Activated CD8-positive, alpha-beta T cell treated with anti-CD3 and anti-CD28 coated beads for 36 hours (primary cell): ENCODE measurements at regions of chr11 and their contacts with region 1.

Region 1: DNA sequence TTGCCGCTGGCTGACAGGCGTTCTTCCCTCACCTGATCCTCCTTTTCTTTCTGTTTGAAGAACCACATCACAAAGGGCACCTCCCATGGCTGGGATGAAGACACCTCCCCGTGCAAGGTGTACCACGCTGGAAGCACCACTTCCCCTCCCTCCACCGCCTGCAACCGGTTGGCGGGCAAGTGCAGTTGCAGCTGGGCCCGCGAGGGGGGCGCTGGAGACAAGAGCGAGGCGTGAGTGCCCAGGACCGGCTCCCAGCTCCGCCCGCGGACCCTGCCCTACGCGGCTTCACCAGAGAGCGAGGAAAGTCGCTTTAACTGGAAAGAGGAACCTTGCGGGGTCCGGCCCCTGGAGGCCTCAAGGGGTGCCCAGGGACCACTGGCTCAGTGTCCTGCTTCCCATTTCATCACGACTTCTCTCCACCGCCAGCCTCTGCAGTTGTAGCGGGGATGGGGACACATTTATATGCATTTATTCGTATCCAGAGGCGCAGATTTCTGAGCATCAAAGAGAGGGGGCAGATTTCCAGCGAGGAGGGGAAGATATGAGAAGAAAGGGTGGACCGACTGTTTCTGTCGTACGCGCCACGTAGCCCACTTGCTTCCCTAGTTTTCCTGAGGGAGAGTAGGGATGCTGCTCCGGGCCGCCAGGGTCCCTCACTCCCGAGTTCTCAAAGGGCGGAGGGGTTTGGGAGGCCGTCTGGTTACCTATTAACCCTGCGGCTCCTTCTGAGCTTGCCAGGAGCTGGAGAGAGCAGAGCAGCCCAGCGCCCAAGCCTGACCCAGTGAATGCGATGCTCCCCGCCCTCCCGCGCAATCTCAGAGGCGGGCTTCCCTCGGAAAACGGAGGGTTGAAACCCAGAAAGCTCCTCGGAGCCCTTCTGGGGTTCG is 3.5 kb downstream of the ESAM start:
- DNase-seq: peak; percentile 78
- ATAC-seq: peak; percentile 81
- H3K4me3 Mint-ChIP-seq: peak overlapping the region; percentile 62
- H3K27ac Mint-ChIP-seq: no peak overlapping the region
- H3K4me1 Mint-ChIP-seq: peaks cover 24% of the 10 kb centered on the region
- H3K27me3 Mint-ChIP-seq: peaks cover 43% of the 10 kb centered on the region
- CTCF ChIP-seq: peak; percentile 85

Region 2: DNA sequence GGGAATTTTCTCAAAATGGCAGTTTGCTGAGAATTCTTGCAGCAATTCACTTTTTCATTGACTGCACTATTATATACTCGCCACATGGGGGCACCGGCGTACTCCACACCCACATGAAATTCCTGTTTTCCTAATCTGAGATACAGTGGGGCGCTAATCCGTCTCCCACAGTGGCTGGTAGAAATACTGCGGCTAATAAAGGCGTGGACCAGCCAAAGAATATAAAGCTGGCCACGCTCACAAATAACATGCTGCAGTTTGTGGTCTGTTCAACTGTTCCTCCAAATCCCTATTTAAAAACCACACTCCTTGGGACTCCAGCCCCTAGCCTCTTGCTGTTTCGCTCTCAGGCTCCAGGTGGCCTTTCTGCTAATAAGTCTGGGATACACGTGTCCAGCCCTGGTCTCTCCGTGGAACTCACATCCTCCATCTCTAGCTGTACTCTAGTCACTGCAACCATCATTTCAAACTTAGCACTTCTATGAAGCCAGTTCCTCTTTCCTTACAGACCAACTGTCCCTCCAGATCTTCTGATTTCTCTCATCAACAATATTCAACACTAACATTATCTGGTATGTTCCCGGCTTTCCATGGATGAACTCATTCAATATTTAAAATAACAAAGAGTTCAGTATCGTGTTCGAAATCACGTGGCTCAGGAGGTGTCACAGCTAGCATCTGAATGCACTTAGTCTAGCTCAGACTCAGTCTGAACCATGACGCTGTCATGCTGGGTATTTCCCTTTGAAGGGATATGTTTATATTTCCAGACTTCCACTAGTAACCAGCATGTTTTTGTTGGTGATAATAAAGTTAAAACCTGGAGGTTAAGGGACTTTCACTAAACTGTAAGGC is 113.9 kb before region 1 on chr11:
- CTCF ChIA-PET with region 1: interaction called, 14 read pairs
- POLR2A ChIA-PET with region 1: no interaction called
- intact Hi-C with region 1: no loop called
- DNase-seq: peak; percentile 27
- ATAC-seq: peak; percentile 78
- H3K4me3 Mint-ChIP-seq: no peak overlapping the region
- H3K27ac Mint-ChIP-seq: no peak overlapping the region
- H3K4me1 Mint-ChIP-seq: no peaks in the 10 kb centered on the region
- H3K27me3 Mint-ChIP-seq: no peaks in the 10 kb centered on the region
- CTCF ChIP-seq: peak; percentile 94

Region 3: DNA sequence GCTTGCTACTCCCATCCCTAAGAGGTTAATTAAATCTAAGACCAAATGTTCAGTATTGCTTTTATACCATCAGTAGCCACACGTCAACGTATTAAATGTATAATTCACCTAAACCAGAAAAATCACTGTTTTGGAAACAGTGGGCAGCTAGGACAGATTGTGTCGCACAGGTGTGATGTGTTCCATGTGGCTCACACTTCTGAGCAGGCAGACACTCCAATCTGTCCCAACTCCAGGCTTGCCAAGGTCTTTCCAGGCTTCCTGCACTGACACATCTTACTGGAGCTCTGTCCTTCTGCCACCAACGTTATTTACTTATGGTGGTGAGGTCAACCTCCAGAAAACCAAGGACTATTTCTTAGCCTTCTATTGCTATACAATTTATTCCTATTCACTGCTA is 96.5 kb before region 1 on chr11:
- CTCF ChIA-PET with region 1: interaction called, 13 read pairs
- POLR2A ChIA-PET with region 1: no interaction called
- intact Hi-C with region 1: no loop called
- DNase-seq: no peak
- ATAC-seq: no peak
- H3K4me3 Mint-ChIP-seq: no peak overlapping the region
- H3K27ac Mint-ChIP-seq: no peak overlapping the region
- H3K4me1 Mint-ChIP-seq: no peaks in the 10 kb centered on the region
- H3K27me3 Mint-ChIP-seq: no peaks in the 10 kb centered on the region
- CTCF ChIP-seq: no peak

Region 4: GRCh38 chr11:124707829-124708228 is 50.7 kb before region 1 on chr11:
- CTCF ChIA-PET with region 1: no interaction called
- POLR2A ChIA-PET with region 1: no interaction called
- intact Hi-C with region 1: no loop called
- DNase-seq: no peak
- ATAC-seq: no peak
- H3K4me3 Mint-ChIP-seq: no peak overlapping the region
- H3K27ac Mint-ChIP-seq: no peak overlapping the region
- H3K4me1 Mint-ChIP-seq: no peaks in the 10 kb centered on the region
- H3K27me3 Mint-ChIP-seq: peaks cover 4% of the 10 kb centered on the region
- CTCF ChIP-seq: no peak

Region 5: DNA sequence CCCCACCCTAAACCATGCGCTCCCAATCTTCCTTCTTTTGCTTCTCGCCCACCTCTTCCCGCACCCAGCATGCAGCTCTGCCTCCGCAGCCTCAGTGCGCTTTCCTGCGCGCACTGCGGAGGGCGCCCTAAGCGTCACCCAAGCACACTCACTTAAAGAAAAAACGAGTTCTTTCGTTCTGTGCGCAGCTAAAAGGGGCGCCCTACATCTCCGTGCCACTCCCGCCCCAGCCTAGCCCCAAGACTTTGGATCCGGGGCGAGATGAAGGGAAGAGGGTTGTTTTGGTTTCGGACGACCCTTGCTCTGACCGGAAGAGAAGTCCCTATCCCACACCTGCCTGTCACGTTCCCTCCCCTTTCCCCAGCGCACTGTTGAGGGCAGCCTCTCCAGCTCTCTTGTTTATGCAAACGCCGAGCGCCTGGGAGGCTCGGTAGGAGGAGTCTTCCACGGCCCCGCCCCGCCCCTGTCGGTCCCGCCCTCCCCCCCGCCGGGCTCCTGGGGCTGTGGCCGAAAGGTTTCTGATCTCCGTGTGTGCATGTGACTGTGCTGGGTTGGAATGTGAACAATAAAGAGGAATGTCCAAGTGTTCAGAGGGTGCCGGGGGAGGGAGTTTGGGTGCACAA is 11.8 kb before region 1 on chr11:
- CTCF ChIA-PET with region 1: interaction called, 77 read pairs
- POLR2A ChIA-PET with region 1: interaction called, 5 read pairs
- intact Hi-C with region 1: loop called (anchors 2 kb)
- DNase-seq: peak; percentile 79
- ATAC-seq: peak; percentile 92
- H3K4me3 Mint-ChIP-seq: peak overlapping the region; percentile 79
- H3K27ac Mint-ChIP-seq: peak overlapping the region; percentile 79
- H3K4me1 Mint-ChIP-seq: peaks cover 4% of the 10 kb centered on the region
- H3K27me3 Mint-ChIP-seq: peaks cover 6% of the 10 kb centered on the region
- CTCF ChIP-seq: no peak

Region 6: GRCh38 chr11:124778281-124778680 is 19.7 kb after region 1 on chr11:
- CTCF ChIA-PET with region 1: interaction called, 16 read pairs
- POLR2A ChIA-PET with region 1: no interaction called
- intact Hi-C with region 1: no loop called
- DNase-seq: no peak
- ATAC-seq: no peak
- H3K4me3 Mint-ChIP-seq: no peak overlapping the region
- H3K27ac Mint-ChIP-seq: no peak overlapping the region
- H3K4me1 Mint-ChIP-seq: peaks cover 11% of the 10 kb centered on the region
- H3K27me3 Mint-ChIP-seq: no peaks in the 10 kb centered on the region
- CTCF ChIP-seq: no peak

Region 7: GRCh38 chr11:124793466-124794278 is 35.1 kb after region 1 on chr11:
- CTCF ChIA-PET with region 1: interaction called, 42 read pairs
- POLR2A ChIA-PET with region 1: interaction called, 3 read pairs
- intact Hi-C with region 1: loop called (anchors 5 kb)
- DNase-seq: peak; percentile 47
- ATAC-seq: peak; percentile 71
- H3K4me3 Mint-ChIP-seq: no peak overlapping the region
- H3K27ac Mint-ChIP-seq: no peak overlapping the region
- H3K4me1 Mint-ChIP-seq: peaks cover 48% of the 10 kb centered on the region
- H3K27me3 Mint-ChIP-seq: no peaks in the 10 kb centered on the region
- CTCF ChIP-seq: peak; percentile 76

Region 8: GRCh38 chr11:124800226-124800929 is 41.8 kb after region 1 on chr11 and contains the start of gene MSANTD2:
- CTCF ChIA-PET with region 1: interaction called, 42 read pairs
- POLR2A ChIA-PET with region 1: interaction called, 3 read pairs
- intact Hi-C with region 1: loop called (anchors 5 kb)
- DNase-seq: peak; percentile 83
- ATAC-seq: peak; percentile 89
- H3K4me3 Mint-ChIP-seq: peak within 1 kb of the TSS; percentile 87
- H3K27ac Mint-ChIP-seq: peak within 1 kb of the TSS; percentile 92
- H3K4me1 Mint-ChIP-seq: peaks cover 29% of the 10 kb centered on the region
- H3K27me3 Mint-ChIP-seq: no peaks in the 10 kb centered on the region
- CTCF ChIP-seq: no peak
- total RNA-seq, gene MSANTD2: 5.8 to 7.3 TPM